ENCODE measurements at regions of chr10 and their contacts with region 1.

Region 1: DNA sequence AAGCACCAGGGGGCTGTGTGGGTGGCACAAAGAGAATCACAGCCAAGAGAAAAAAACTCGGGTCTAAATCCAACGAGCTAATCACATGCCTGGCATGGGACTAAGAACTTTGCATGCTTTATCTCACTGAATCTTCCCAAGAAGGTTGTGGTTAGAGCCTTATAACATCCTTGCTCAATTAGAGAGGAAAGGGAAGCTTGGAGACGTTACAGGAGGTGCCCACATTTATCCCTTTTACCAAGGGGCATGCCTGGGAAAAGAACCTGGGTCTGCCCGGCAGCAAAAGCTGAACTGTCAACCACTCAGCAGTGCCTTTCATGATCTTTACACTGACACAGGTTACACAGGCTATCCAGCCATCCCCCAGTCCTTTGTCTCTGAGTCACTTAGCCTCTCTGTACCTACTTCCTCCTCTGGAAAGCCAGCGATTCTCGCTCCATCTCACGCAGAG is 190.1 kb downstream of the PRPF18 start:
- DNase-seq: no peak
- ATAC-seq: peak; percentile 74
- H3K4me3 Mint-ChIP-seq: no peak overlapping the region
- H3K27ac Mint-ChIP-seq: no peak overlapping the region
- H3K4me1 Mint-ChIP-seq: peaks cover 41% of the 10 kb centered on the region
- H3K27me3 Mint-ChIP-seq: peaks cover 25% of the 10 kb centered on the region
- CTCF ChIP-seq: no peak

Region 2: GRCh38 chr10:13160934-13161856 is 615.7 kb before region 1 on chr10 and contains the start of gene MCM10:
- CTCF ChIA-PET with region 1: no interaction called
- POLR2A ChIA-PET with region 1: no interaction called
- intact Hi-C with region 1: loop called (anchors 2 kb)
- DNase-seq: peak; percentile 88
- ATAC-seq: peak; percentile 100
- H3K4me3 Mint-ChIP-seq: peak within 1 kb of the TSS; percentile 89
- H3K27ac Mint-ChIP-seq: peak within 1 kb of the TSS; percentile 43
- H3K4me1 Mint-ChIP-seq: peaks cover 14% of the 10 kb centered on the region
- H3K27me3 Mint-ChIP-seq: no peaks in the 10 kb centered on the region
- CTCF ChIP-seq: peak; percentile 77
- total RNA-seq, gene MCM10: 3.7 and 4.6 TPM in 2 replicates

Region 3: GRCh38 chr10:13586676-13587355 is 190.1 kb before region 1 on chr10 and contains the start of gene PRPF18:
- CTCF ChIA-PET with region 1: no interaction called
- POLR2A ChIA-PET with region 1: no interaction called
- intact Hi-C with region 1: loop called (anchors 1 kb)
- DNase-seq: peak; percentile 93
- ATAC-seq: peak; percentile 100
- H3K4me3 Mint-ChIP-seq: peak within 1 kb of the TSS; percentile 100
- H3K27ac Mint-ChIP-seq: peak within 1 kb of the TSS; percentile 98
- H3K4me1 Mint-ChIP-seq: peaks cover 29% of the 10 kb centered on the region
- H3K27me3 Mint-ChIP-seq: peaks cover 19% of the 10 kb centered on the region
- CTCF ChIP-seq: peak; percentile 80
- total RNA-seq, gene PRPF18: 20.7 and 26.1 TPM in 2 replicates

Region 4: GRCh38 chr10:13659897-13660550 is 116.9 kb before region 1 on chr10:
- CTCF ChIA-PET with region 1: interaction called, 22 read pairs
- POLR2A ChIA-PET with region 1: interaction called, 3 read pairs
- intact Hi-C with region 1: loop called (anchors 1 kb)
- DNase-seq: peak; percentile 63
- ATAC-seq: peak; percentile 75
- H3K4me3 Mint-ChIP-seq: no peak overlapping the region
- H3K27ac Mint-ChIP-seq: no peak overlapping the region
- H3K4me1 Mint-ChIP-seq: peaks cover 11% of the 10 kb centered on the region
- H3K27me3 Mint-ChIP-seq: no peaks in the 10 kb centered on the region
- CTCF ChIP-seq: peak; percentile 83

Region 5: DNA sequence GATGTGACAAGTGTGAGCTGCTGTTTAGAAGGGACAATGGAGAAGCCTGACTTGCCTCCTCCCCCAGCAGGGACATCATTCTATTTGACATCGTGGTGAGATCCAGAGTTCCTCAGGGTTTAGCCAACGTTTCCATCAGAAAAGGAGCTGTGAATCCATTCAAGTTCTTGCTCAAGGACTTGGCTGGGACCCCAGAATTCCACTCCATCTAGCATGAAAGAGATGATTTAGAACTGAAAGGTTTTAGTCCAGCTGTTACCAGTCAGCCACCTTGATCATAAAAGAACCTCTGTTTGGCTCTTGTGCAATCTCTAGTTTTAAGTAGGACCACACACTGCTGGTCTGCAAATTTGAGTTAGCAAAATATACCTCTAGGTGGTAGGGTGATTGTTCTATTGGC is 216.3 kb after region 1 on chr10:
- CTCF ChIA-PET with region 1: no interaction called
- POLR2A ChIA-PET with region 1: no interaction called
- intact Hi-C with region 1: loop called (anchors 2 kb)
- DNase-seq: no peak
- ATAC-seq: peak; percentile 13
- H3K4me3 Mint-ChIP-seq: peak overlapping the region; percentile 16
- H3K27ac Mint-ChIP-seq: peak overlapping the region; percentile 42
- H3K4me1 Mint-ChIP-seq: peaks cover 47% of the 10 kb centered on the region
- H3K27me3 Mint-ChIP-seq: no peaks in the 10 kb centered on the region
- CTCF ChIP-seq: no peak